AG04450 (cell line): ENCODE measurements at regions of chr17 and their contacts with region 1.

Region 1: GRCh38 chr17:30894236-30894635 is 11.8 kb downstream of the TEFM start:
- DNase-seq: no peak
- H3K4me3 ChIP-seq: no peak overlapping the region
- H3K27ac ChIP-seq: no peak overlapping the region
- H3K27me3 ChIP-seq: no peaks in the 10 kb centered on the region
- CTCF ChIP-seq: no peak

Region 2: GRCh38 chr17:30864636-30865035 is 29.6 kb before region 1 on chr17:
- CTCF ChIA-PET with region 1: no interaction called
- POLR2A ChIA-PET with region 1: no interaction called
- DNase-seq: no peak
- H3K4me3 ChIP-seq: no peak overlapping the region
- H3K27ac ChIP-seq: no peak overlapping the region
- H3K27me3 ChIP-seq: no peaks in the 10 kb centered on the region
- CTCF ChIP-seq: no peak

Region 3: GRCh38 chr17:30992551-30992950 is 98.3 kb after region 1 on chr17:
- CTCF ChIA-PET with region 1: no interaction called
- POLR2A ChIA-PET with region 1: interaction called, 12 read pairs
- DNase-seq: no peak
- H3K4me3 ChIP-seq: no peak overlapping the region
- H3K27ac ChIP-seq: no peak overlapping the region
- H3K27me3 ChIP-seq: no peaks in the 10 kb centered on the region
- CTCF ChIP-seq: no peak